ENCODE measurements at regions of chr18 and their contacts with region 1.

Region 1: GRCh38 chr18:54780285-54780861 is 47.9 kb upstream of the RAB27B start:
- DNase-seq: no peak

Region 2: GRCh38 chr18:54702686-54703085 is 77.7 kb before region 1 on chr18:
- intact Hi-C with region 1: no loop called
- DNase-seq: no peak

Region 3: DNA sequence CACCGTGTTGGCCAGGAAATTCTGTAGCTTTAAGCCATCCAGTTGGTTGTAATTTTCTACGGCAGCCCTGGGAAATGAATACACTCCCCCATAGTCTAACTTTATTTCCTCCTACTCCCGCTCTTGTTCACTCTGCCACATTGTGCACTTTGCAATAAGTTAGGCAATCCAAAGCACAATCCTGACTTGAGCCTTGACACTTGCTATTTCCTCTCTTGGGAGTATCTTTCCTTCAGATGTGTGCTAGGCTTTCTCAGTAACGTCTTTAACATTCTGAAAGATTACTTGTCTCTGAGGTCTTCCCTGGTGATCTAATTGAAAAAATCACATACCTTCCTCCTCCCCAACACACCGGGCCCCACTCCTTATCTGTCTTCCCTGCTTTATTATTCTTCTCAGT is 18.0 kb before region 1 on chr18:
- intact Hi-C with region 1: loop called in 1 of 2 experiments (anchors 1 kb)
- DNase-seq: no peak

Region 4: DNA sequence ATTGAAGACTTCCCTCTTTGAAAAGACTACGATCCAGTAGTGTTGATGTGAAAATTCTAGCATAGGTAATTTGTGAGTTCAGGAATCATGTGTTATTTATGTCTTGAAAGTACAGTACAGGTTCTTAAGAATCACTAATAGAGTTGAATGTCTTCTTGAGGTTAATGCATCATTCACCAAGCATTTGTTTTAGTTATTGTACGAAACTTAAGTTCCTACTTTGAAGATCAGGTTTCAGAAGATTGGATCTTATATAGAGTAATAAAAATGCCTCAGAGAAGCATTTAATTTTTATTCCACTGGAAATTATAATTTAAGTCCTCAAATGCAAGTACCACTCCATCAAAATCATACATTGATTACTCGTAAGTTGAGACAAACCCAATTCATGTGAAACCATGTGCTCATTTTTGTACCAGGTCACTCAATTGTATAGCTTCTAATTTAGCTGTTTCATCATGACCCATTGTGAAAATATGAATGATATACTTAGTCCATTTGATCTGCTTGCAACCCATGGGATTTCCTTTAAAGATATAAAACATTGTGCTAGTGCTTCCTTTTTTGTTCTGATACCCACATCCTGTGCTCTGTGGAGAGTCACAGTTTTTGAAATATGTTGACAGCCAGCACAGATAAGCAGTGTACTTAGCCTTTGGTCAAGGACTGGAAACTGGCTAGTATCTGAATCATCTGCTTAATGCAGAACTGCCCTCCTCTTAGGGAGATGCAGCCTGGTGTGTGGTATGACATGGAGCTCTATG is 25.4 kb after region 1 on chr18:
- intact Hi-C with region 1: no loop called
- DNase-seq: no peak

Measured in posterior vena cava (tissue), 2 donors.